ENCODE measurements at regions of chr3 and their contacts with region 1.

Region 1: GRCh38 chr3:171328419-171329082 is 131.7 kb downstream of the TNIK start:
- DNase-seq: peak in 2 of 4 experiments; percentile 35 to 77
- ATAC-seq: peak; percentile 96
- H3K4me3 ChIP-seq: no peak overlapping the region
- H3K27ac ChIP-seq: no peak overlapping the region
- H3K4me1 ChIP-seq: peaks cover 1 to 4% of the 10 kb centered on the region in 2 experiments; a peak in 3 of 5 replicates
- H3K27me3 ChIP-seq: no peaks in the 10 kb centered on the region
- CTCF ChIP-seq: peak; percentile 72 to 90 (median 78)
- EP300 ChIP-seq: no peak
- POLR2A ChIP-seq: no peak
- RAD21 ChIP-seq: peak; percentile 45 to 77; a peak in 3 of 4 replicates

Region 2: DNA sequence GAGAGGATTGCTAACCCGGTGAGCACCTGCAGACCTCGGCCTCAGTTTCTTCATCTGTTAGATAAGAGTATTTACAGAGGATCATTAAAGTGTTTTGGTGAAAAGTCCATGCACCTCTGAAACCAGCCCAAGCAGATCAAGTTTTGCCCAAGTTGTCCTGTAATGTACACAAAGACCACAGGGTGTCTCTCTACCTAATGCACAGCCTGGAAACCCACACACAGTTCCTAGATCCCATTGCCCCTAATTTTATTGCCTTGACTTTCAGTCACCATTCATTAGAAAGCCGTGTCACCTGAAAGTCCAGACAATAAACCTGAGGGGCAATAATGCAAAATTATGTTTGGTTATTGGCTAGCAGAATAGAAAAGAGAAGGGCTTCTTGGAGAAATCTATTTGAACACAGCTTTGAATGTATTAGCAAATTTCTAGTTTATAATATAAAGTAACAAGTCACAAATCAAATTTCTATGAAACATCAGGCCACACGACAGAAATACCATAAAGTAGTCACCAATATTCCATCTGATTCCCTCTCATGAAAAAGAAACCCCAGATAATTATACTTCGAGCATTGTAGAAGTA is 140.8 kb before region 1 on chr3:
- CTCF ChIA-PET with region 1: no interaction called
- POLR2A ChIA-PET with region 1: no interaction called
- in situ Hi-C with region 1: no loop called
- intact Hi-C with region 1: loop called (anchors 5 kb)
- DNase-seq: peak; percentile 32 to 63 (median 46)
- ATAC-seq: peak; percentile 62
- H3K4me3 ChIP-seq: no peak overlapping the region
- H3K27ac ChIP-seq: no peak overlapping the region
- H3K4me1 ChIP-seq: peaks cover 4 to 35% of the 10 kb centered on the region in 2 experiments
- H3K27me3 ChIP-seq: no peaks in the 10 kb centered on the region
- CTCF ChIP-seq: peak; percentile 67 to 71 (median 70)
- EP300 ChIP-seq: no peak
- POLR2A ChIP-seq: no peak
- RAD21 ChIP-seq: peak; percentile 67 to 81

Region 3: DNA sequence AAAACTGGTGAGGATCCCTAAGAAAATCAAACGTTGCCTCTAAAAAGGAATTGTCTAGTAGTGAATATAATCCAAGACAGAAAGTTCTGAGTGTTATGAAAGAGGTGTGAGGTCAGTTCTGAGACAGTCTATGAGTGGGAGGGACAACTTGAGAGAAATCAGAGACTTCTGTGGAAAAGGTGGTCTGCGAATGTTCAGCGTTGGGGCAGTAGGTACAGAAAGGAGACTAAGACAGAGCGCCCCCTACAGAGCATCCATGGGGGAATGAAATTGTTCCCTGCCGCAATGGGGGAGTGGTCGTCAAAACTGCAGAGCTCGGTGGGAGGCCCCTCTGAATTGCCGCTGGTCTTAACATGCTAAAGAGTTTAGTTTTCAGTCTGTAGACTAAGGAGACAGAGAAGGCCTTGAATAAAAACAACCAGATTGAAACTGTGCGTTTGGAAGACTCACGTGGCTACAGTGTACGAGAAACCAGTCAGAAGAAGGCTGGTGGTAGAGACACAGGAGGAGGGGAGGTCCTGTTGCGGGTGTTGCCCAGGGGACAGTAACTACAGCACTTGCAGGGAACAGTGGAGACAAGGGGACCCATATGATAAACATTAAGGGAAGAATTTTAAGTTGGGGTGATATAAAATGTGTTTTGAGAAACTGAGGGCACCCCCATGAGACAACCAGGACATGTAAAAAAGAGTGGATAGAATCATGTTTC is 124.8 kb after region 1 on chr3:
- CTCF ChIA-PET with region 1: no interaction called
- POLR2A ChIA-PET with region 1: no interaction called
- in situ Hi-C with region 1: no loop called
- intact Hi-C with region 1: loop called (anchors 2 kb)
- DNase-seq: peak; percentile 54 to 75 (median 62)
- ATAC-seq: peak; percentile 77
- H3K4me3 ChIP-seq: no peak overlapping the region
- H3K27ac ChIP-seq: no peak overlapping the region
- H3K4me1 ChIP-seq: peaks cover 10 to 24% of the 10 kb centered on the region in 2 experiments; a peak in 4 of 5 replicates
- H3K27me3 ChIP-seq: no peaks in the 10 kb centered on the region
- CTCF ChIP-seq: peak; percentile 68 to 85 (median 69)
- EP300 ChIP-seq: no peak
- POLR2A ChIP-seq: no peak
- RAD21 ChIP-seq: peak; percentile 68 to 72

Measured in K562 (cell line).